ENCODE measurements at regions of chr4 and their contacts with region 1.

Region 1: GRCh38 chr4:119939071-119939995 is 127.3 kb downstream of the MAD2L1 start:
- DNase-seq: no peak
- H3K4me3 ChIP-seq: no peak overlapping the region
- H3K27ac ChIP-seq: peak overlapping the region; percentile 44 to 63
- H3K4me1 ChIP-seq: peaks cover 0 to 15% of the 10 kb centered on the region in 2 donors
- H3K27me3 ChIP-seq: no peaks in the 10 kb centered on the region
- CTCF ChIP-seq: no peak

Region 2: DNA sequence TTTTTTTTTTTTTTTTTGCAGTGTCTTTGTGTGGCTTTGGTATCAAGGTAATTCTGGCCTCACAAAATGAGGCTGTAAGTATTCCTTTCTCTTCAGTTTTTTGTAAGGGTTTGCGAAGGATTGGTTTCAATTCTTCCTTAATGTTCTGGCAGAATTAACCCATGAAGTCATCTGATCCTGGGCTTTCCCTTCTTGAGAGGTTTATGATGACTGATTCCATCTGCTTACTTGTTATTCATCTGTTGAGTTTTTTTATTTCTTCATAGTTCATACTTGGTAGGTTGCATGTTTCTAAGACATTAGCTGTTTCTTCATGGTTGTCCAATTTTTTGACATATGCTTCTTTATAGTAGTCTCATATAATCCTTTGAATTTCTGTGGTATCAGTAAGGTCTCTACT is 129.3 kb before region 1 on chr4:
- intact Hi-C with region 1: loop called (anchors 10 kb)
- DNase-seq: no peak
- H3K4me3 ChIP-seq: no peak overlapping the region
- H3K27ac ChIP-seq: no peak overlapping the region
- H3K4me1 ChIP-seq: no peaks in the 10 kb centered on the region
- H3K27me3 ChIP-seq: no peaks in the 10 kb centered on the region
- CTCF ChIP-seq: no peak